Activated CD8-positive, alpha-beta T cell treated with anti-CD3 and anti-CD28 coated beads for 36 hours (primary cell): ENCODE measurements at regions of chr1 and their contacts with region 1.

Region 1: DNA sequence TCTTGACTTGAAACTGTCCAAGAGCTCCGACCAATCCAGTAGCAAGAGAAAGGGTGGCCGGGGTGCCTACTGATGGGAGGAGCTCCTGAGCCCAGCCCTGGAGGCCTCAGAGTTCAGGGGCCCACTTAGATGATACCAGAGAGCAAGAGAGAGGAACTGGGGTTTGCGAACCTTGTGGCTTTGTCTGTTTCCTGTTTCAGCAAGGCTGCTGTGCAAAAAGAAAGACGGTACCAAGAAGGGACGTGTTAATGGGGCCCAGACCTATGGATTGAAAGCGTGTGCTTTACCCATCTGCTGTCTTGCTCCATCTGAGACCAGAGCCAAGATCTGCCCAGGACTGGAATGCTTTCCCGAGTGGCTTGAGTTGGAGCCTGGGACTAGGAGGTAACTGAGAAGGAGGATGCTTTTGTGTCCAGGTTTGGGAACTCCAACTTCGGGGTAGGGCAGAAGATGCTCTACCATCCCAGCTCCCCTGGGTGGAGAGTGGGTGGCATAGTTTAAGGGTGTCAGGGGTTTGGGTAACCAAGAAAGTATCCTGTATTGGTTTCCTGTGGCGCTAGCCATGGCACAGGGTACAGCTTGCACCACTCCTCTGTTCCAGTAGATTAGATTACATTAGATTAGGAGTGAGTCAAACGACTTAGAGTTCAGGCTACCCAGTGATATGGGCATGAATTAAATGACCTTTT is at the start of gene TRAF3IP3:
- DNase-seq: peak; percentile 94
- ATAC-seq: peak; percentile 79
- H3K4me3 Mint-ChIP-seq: peak within 1 kb of the TSS; percentile 91
- H3K27ac Mint-ChIP-seq: peak within 1 kb of the TSS; percentile 98
- H3K4me1 Mint-ChIP-seq: peaks cover 72% of the 10 kb centered on the region
- H3K27me3 Mint-ChIP-seq: no peaks in the 10 kb centered on the region
- CTCF ChIP-seq: no peak
- total RNA-seq, gene TRAF3IP3: 194 TPM

Region 2: DNA sequence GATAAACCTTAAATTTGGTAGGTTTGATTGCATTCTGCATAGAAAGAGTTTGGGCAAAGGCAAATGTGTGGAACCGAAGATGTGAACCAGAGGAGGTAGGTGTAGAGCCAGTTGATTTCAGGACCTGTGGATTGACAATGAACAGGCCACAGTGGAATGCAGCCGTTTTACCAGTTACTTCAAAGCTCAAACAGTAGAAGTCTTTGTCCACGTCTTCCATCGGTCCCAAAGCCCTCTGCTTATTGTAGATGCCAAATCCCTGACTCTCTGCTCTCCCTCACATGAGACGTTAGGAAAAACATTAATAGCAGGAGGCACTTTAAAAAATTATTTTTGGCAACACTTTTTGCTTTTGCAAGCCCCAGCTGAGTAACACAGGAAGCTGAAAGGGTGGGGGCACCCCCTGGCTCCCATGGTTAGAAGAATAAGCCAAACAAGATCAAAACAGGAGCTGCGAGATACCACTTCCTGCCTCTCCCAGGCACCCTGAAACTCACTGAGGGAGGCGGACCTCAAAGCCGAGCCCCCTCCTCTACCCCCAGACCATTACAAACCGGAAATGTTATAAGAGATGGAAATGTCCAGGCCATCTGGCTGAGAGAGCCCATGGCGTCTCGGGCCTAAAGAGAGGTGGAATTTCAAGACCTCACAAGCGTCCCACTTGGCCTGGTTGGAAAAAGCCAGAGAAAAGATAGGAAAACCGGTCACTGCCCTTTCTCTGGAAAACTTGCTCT is 13.3 kb after region 1 on chr1:
- CTCF ChIA-PET with region 1: interaction called, 105 read pairs
- POLR2A ChIA-PET with region 1: interaction called, 242 read pairs
- intact Hi-C with region 1: loop called (anchors 1 kb)
- DNase-seq: peak; percentile 94
- ATAC-seq: peak; percentile 67
- H3K4me3 Mint-ChIP-seq: no peak overlapping the region
- H3K27ac Mint-ChIP-seq: no peak overlapping the region
- H3K4me1 Mint-ChIP-seq: peaks cover 39% of the 10 kb centered on the region
- H3K27me3 Mint-ChIP-seq: no peaks in the 10 kb centered on the region
- CTCF ChIP-seq: no peak

Region 3: DNA sequence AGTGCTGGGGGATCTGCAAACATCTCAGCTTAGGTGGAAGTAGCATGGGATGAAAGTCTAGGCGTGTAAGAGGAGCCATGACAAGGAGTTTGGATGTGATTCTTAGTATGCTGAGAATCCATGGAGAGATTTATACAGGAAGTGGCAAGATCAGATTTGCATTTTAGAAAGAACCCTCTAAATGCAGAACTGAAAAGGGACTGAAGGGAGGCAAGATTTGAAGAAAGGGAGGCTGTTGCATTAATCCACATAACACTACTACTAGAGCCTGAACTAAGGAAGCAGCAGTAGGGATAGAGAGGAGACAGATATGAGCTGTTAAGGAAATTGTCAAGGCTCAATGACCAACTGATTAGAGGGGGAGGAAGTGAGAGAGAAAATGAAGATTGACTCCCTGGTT is 18.5 kb after region 1 on chr1:
- CTCF ChIA-PET with region 1: interaction called, 105 read pairs
- POLR2A ChIA-PET with region 1: interaction called, 242 read pairs
- intact Hi-C with region 1: no loop called
- DNase-seq: no peak
- ATAC-seq: no peak
- H3K4me3 Mint-ChIP-seq: no peak overlapping the region
- H3K27ac Mint-ChIP-seq: peak overlapping the region; percentile 80
- H3K4me1 Mint-ChIP-seq: peaks cover 44% of the 10 kb centered on the region
- H3K27me3 Mint-ChIP-seq: no peaks in the 10 kb centered on the region
- CTCF ChIP-seq: no peak

Region 4: DNA sequence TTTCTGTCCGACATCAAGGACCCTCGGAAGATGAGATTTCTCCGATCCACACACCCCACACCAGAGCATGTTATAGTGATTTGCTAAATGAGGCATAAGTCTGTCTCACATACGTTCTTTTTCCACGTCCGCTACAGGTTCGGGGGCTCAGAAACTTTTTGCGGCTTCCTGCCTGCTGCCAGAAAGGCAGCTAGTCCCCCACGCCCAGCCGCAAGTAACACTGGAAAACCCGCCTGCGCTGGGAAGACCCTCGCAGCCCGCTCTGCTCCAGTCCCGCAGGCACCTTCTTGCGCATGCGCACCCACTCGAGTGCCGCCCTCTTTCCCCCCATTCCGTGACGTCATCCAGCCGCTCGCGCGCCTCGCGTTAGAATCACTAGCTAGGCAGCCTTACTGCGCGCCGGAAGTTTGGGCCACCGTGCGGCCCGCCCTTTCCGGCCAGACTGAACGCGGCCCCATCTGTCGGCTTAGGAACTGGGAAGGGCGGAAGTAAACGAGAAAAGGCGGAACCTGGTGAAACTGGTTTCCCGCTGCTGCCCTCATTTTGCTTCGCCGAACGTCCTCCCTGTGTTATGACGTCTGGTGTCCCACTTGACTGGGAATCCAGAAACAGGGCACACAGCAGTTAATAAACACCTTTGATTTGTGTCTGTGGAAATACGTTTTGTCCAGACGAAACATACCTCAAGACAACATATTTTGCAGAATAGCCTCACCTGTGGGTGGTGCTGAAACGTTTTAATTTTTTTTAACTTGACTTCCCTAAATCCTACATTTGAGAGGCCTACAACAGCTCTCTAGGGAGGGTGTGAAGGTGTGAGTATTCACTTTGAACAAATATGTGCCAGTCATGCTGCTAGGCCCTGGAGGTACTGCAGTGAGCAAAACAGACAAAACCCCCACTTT is 28.4 kb after region 1 on chr1 and contains the start of gene C1orf74:
- CTCF ChIA-PET with region 1: interaction called, 3 read pairs
- POLR2A ChIA-PET with region 1: interaction called, 10 read pairs
- intact Hi-C with region 1: loop called (anchors 2 kb)
- DNase-seq: peak; percentile 99
- ATAC-seq: peak; percentile 98
- H3K4me3 Mint-ChIP-seq: peak within 1 kb of the TSS; percentile 96
- H3K27ac Mint-ChIP-seq: peak within 1 kb of the TSS; percentile 96
- H3K4me1 Mint-ChIP-seq: peaks cover 39% of the 10 kb centered on the region
- H3K27me3 Mint-ChIP-seq: no peaks in the 10 kb centered on the region
- CTCF ChIP-seq: no peak
- total RNA-seq, gene C1orf74: 2.8 to 3.0 TPM